Ascending aorta (tissue), 2 donors: ENCODE measurements at regions of chr1 and their contacts with region 1.

Region 1: DNA sequence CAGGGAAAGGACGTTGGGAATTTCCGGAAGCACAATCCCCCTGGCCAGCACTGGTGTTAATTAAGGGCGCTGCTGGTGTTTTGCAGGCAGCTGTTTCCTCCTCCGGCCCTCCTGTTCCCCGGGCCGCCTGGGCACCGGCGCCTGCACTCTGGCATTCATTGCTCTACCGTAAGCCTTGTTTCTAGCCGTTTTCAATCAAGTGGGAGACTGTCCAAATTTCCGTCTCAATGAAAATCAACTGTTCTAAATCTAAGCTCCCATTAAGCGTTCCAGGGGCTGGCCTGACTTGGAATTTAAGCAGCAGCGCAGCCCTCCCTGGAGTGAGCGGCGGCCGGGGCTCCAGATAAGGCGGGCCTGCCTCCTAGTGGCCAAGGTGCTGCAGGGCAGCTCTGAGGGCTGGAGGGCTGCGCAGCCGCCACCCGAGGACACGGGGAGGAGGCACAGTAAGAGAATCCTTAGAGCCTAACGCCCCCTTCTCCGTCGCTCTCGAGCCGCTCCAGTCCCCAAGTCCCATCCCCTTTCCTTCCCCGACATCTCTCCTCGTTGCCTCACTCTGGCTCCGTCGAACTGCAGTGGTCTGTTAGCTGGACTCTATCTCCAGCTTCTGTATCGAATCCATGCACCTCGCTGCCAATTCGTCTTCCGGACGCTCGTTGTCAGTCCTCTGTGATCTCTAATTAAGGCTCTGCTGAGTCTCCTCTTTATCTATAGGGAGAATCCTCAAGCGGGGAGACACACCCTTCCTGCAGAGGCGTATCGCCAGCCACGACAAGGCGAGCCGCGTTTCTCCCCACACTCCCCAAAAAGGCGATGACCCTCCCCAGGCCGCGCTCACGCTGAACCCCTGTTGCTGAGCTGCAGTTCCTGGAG is 57.8 kb upstream of the LRRC8D start:
- DNase-seq: peak; percentile 26 to 91
- H3K4me3 ChIP-seq: peak overlapping the region; percentile 51 to 65
- H3K27ac ChIP-seq: no peak overlapping the region
- H3K4me1 ChIP-seq: peaks cover 0 to 4% of the 10 kb centered on the region in 2 donors
- H3K27me3 ChIP-seq: no peaks in the 10 kb centered on the region
- CTCF ChIP-seq: peak; percentile 91 to 98 (median 95)

Region 2: DNA sequence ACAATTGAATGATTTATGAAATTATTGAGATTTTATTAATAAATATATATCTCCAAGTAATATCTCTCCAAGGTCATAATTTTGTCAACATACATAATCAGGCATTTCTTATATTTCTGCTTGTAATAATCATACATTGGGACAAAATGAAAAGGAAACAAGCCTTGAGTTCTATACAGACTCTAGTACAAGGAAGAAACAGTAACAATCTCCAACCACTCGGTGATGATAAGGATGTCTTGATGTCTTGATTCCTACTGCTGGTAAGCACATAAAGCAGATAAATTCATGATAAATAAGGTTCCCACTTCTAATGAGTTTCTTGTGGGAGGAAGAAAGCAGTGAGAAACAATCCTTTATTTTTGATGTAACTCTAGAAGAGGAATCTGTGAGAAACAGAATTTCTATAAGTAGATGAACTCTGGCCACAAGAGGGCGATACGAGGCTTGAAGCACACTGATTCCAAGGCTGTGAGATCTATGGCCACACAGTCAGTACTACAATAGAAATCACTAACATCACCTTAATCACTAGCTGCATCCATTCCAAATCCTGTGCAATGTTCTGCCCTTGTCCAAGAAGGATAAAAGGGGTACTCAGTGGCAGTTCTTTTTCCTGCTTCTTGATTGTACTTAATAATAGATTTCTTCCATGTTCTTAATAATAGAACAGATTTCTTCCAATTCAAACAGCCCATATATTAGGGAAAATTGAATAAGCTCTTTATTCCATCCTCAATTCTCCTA is 279.8 kb before region 1 on chr1:
- intact Hi-C with region 1: loop called (anchors 2 kb)
- DNase-seq: peak in 1 of 2 donors; percentile 82
- H3K4me3 ChIP-seq: no peak overlapping the region
- H3K27ac ChIP-seq: no peak overlapping the region
- H3K4me1 ChIP-seq: no peaks in the 10 kb centered on the region
- H3K27me3 ChIP-seq: no peaks in the 10 kb centered on the region
- CTCF ChIP-seq: peak; percentile 43 to 68 (median 63)

Region 3: GRCh38 chr1:89603651-89604413 is 159.2 kb before region 1 on chr1:
- intact Hi-C with region 1: loop called (anchors 5 kb)
- DNase-seq: no peak
- H3K4me3 ChIP-seq: no peak overlapping the region
- H3K27ac ChIP-seq: no peak overlapping the region
- H3K4me1 ChIP-seq: no peaks in the 10 kb centered on the region
- H3K27me3 ChIP-seq: no peaks in the 10 kb centered on the region
- CTCF ChIP-seq: no peak

Region 4: GRCh38 chr1:89632657-89633247 is 130.3 kb before region 1 on chr1 and contains the start of gene LRRC8C:
- intact Hi-C with region 1: loop called (anchors 1 kb)
- DNase-seq: peak; percentile 47 to 90
- H3K4me3 ChIP-seq: peak within 1 kb of the TSS; percentile 89 to 98
- H3K27ac ChIP-seq: peak within 1 kb of the TSS; percentile 89 to 95
- H3K4me1 ChIP-seq: no peaks in the 10 kb centered on the region
- H3K27me3 ChIP-seq: no peaks in the 10 kb centered on the region
- CTCF ChIP-seq: peak; percentile 4 to 88 (median 18)
- total RNA-seq, gene LRRC8C: 7.5 TPM